ENCODE measurements at regions of chr9 and their contacts with region 1.

Region 1: GRCh38 chr9:3467593-3468219 is 58.1 kb downstream of the RFX3 start:
- DNase-seq: peak; percentile 51 to 70 (median 61)
- H3K4me3 ChIP-seq: no peak overlapping the region
- H3K4me3 Mint-ChIP-seq: peak overlapping the region in 2 of 8 donors; percentile 36 to 41
- H3K27ac ChIP-seq: no peak overlapping the region
- H3K27ac Mint-ChIP-seq: peak overlapping the region in 2 of 7 donors; percentile 27 to 29
- H3K4me1 ChIP-seq: peaks cover 5% of the 10 kb centered on the region
- H3K4me1 Mint-ChIP-seq: peaks cover 4 to 8% (median 5%) of the 10 kb centered on the region in 4 donors
- H3K27me3 ChIP-seq: no peaks in the 10 kb centered on the region
- H3K27me3 Mint-ChIP-seq: no peaks in the 10 kb centered on the region

Region 2: GRCh38 chr9:3478549-3478953 is 10.8 kb after region 1 on chr9:
- CTCF ChIA-PET with region 1: interaction called, 26 read pairs
- POLR2A ChIA-PET with region 1: no interaction called
- intact Hi-C with region 1: no loop called
- DNase-seq: peak; percentile 17 to 58 (median 30)
- H3K4me3 ChIP-seq: no peak overlapping the region
- H3K4me3 Mint-ChIP-seq: peak overlapping the region; percentile 76 to 98 (median 90)
- H3K27ac ChIP-seq: peak overlapping the region; percentile 58
- H3K27ac Mint-ChIP-seq: peak overlapping the region; percentile 94 to 100 (median 97)
- H3K4me1 ChIP-seq: peaks cover 37% of the 10 kb centered on the region
- H3K4me1 Mint-ChIP-seq: peaks cover 40 to 77% (median 48%) of the 10 kb centered on the region in 4 donors
- H3K27me3 ChIP-seq: no peaks in the 10 kb centered on the region
- H3K27me3 Mint-ChIP-seq: no peaks in the 10 kb centered on the region

Region 3: GRCh38 chr9:3647652-3648051 is 179.9 kb after region 1 on chr9:
- CTCF ChIA-PET with region 1: interaction called, 14 read pairs
- POLR2A ChIA-PET with region 1: no interaction called
- intact Hi-C with region 1: loop called (anchors 1 kb)
- DNase-seq: peak in 1 of 5 donors; percentile 5
- H3K4me3 ChIP-seq: no peak overlapping the region
- H3K4me3 Mint-ChIP-seq: no peak overlapping the region
- H3K27ac ChIP-seq: no peak overlapping the region
- H3K27ac Mint-ChIP-seq: no peak overlapping the region
- H3K4me1 ChIP-seq: no peaks in the 10 kb centered on the region
- H3K4me1 Mint-ChIP-seq: peaks cover 0 to 2% (median under 1%) of the 10 kb centered on the region in 4 donors
- H3K27me3 ChIP-seq: no peaks in the 10 kb centered on the region
- H3K27me3 Mint-ChIP-seq: no peaks in the 10 kb centered on the region

Region 4: GRCh38 chr9:3912817-3913216 is 445.1 kb after region 1 on chr9:
- CTCF ChIA-PET with region 1: no interaction called
- POLR2A ChIA-PET with region 1: no interaction called
- intact Hi-C with region 1: no loop called
- DNase-seq: no peak
- H3K4me3 ChIP-seq: no peak overlapping the region
- H3K4me3 Mint-ChIP-seq: no peak overlapping the region
- H3K27ac ChIP-seq: no peak overlapping the region
- H3K27ac Mint-ChIP-seq: no peak overlapping the region
- H3K4me1 ChIP-seq: no peaks in the 10 kb centered on the region
- H3K4me1 Mint-ChIP-seq: no peaks in the 10 kb centered on the region
- H3K27me3 ChIP-seq: no peaks in the 10 kb centered on the region
- H3K27me3 Mint-ChIP-seq: peaks cover 5 to 10% of the 10 kb centered on the region in 2 donors